ENCODE measurements at regions of chr6 and their contacts with region 1.

Region 1: GRCh38 chr6:105484238-105485161 is 81.6 kb upstream of the PREP start:
- DNase-seq: no peak
- H3K4me3 ChIP-seq: peak overlapping the region; percentile 24
- H3K27ac ChIP-seq: peak overlapping the region; percentile 7
- H3K4me1 ChIP-seq: peaks cover 50% of the 10 kb centered on the region
- H3K27me3 ChIP-seq: no peaks in the 10 kb centered on the region
- CTCF ChIP-seq: peak; percentile 98

Region 2: GRCh38 chr6:105317607-105318533 is 166.6 kb before region 1 on chr6:
- intact Hi-C with region 1: no loop called
- DNase-seq: no peak
- H3K4me3 ChIP-seq: no peak overlapping the region
- H3K27ac ChIP-seq: no peak overlapping the region
- H3K4me1 ChIP-seq: peaks cover 15% of the 10 kb centered on the region
- H3K27me3 ChIP-seq: no peaks in the 10 kb centered on the region
- CTCF ChIP-seq: peak; percentile 43

Region 3: DNA sequence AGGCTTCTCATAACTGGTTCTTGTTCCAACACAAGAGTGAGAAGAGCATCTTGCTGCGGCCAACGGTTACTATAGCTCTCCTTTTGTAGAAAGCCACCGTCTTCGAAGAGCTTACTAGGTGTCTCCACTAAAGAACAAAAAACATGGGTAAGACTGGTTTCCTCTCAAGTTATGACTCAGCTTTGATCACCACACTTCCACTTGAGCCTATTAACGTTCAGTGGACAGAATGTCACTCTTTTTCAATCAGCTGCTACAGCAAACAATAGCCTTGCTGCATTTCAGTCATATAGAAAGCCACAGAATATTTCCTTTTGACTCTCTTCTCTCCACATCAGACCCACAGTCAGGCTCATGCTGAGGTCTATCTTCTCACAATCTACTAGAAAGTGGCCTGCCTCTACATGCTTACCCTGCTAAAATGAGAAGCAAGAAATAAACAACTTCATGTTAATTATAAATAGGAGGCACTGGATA is 161.9 kb after region 1 on chr6:
- intact Hi-C with region 1: no loop called
- DNase-seq: no peak
- H3K4me3 ChIP-seq: no peak overlapping the region
- H3K27ac ChIP-seq: no peak overlapping the region
- H3K4me1 ChIP-seq: peaks cover 11% of the 10 kb centered on the region
- H3K27me3 ChIP-seq: no peaks in the 10 kb centered on the region
- CTCF ChIP-seq: no peak

Region 4: DNA sequence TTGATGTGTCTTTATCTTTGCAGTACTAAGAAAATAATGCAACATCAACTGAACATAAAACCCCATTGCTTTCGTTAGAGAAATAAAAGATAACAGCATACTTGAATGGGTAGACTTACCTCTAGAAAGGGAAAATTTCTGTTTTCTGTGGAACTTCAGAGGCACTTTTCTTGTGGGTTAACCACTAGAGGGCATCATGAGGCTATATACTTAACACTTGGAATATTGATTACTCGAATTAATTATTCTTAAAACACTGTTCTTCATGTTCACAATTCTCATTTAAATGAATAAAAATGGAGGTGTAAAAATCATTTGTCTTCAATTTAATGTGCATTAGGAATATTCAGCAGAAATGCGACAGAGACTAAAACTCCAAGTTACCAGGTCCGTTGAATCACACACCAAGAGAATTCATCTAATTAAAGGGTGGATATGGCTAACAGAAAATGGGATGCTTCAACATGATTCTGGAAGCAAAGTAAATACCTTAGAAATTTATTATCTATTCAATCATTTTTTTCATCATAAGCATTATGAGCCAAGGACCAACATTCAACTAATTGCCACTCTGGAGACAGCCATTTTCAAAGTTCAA is 249.2 kb after region 1 on chr6:
- intact Hi-C with region 1: loop called (anchors 10 kb)
- DNase-seq: no peak
- H3K4me3 ChIP-seq: no peak overlapping the region
- H3K27ac ChIP-seq: no peak overlapping the region
- H3K4me1 ChIP-seq: no peaks in the 10 kb centered on the region
- H3K27me3 ChIP-seq: no peaks in the 10 kb centered on the region
- CTCF ChIP-seq: peak; percentile 71

Region 5: GRCh38 chr6:106223300-106223930 is 738.9 kb after region 1 on chr6:
- intact Hi-C with region 1: loop called (anchors 10 kb)
- DNase-seq: peak; percentile 36
- H3K4me3 ChIP-seq: no peak overlapping the region
- H3K27ac ChIP-seq: no peak overlapping the region
- H3K4me1 ChIP-seq: peaks cover 2% of the 10 kb centered on the region
- H3K27me3 ChIP-seq: no peaks in the 10 kb centered on the region
- CTCF ChIP-seq: peak; percentile 74